MCF 10A (cell line): ENCODE measurements at regions of chr3 and their contacts with region 1.

Region 1: GRCh38 chr3:184765730-184766074 is 46.3 kb upstream of the VPS8 start:
- DNase-seq: peak; percentile 84
- H3K4me3 Mint-ChIP-seq: peak overlapping the region; percentile 59
- H3K27ac Mint-ChIP-seq: peak overlapping the region; percentile 89
- H3K4me1 Mint-ChIP-seq: peaks cover 31% of the 10 kb centered on the region
- H3K27me3 Mint-ChIP-seq: no peaks in the 10 kb centered on the region
- CTCF ChIP-seq: no peak

Region 2: DNA sequence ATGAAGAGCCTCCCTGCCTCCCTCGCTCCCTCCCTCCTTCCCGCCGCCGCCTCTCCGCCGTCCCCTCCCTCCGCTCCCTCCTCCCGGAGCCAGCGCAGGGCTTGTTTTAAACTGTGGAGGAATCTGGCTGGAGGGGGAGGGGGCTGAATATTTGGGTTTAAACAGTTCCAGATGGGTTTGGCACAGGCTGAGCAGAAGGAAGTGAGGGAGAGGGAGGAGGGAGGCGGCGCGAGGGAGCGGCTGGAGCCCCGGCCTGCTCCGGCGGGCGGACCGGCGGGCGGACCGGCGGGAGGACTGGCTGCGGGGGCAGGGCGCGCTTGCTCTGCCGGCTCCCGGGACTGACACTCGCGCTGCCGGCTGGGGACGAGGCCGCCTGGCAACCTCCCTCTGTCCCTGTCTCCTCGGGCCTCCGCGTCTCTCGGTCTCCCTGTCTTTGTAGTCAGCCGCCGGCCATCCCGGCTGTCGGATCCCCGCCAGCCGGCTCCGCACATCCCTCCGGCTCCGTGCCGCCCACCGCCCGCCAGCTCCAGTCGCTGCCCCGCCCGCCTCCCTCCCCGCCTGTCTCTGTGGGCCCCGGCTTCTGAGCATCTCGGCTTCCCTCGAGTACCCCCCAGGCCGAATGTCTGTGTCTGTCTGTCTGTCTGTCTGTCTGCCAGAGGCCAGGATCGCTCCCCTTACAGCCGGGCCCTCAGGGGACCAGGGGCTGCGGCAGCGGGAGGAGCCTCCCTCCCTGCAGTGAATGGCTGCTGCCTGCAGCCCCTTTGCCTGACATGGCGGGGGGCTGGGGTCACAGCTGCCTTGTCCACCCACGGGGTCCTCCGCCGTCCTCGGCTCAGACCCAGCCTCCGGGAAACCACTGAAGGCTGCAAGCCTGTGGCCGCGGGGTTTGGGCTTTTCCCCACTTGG is 196.5 kb before region 1 on chr3:
- CTCF ChIA-PET with region 1: interaction called, 6 read pairs
- POLR2A ChIA-PET with region 1: interaction called, 74 read pairs
- intact Hi-C with region 1: no loop called
- DNase-seq: peak; percentile 78
- H3K4me3 Mint-ChIP-seq: peak overlapping the region; percentile 73
- H3K27ac Mint-ChIP-seq: no peak overlapping the region
- H3K4me1 Mint-ChIP-seq: peaks cover 32% of the 10 kb centered on the region
- H3K27me3 Mint-ChIP-seq: no peaks in the 10 kb centered on the region
- CTCF ChIP-seq: no peak

Region 3: DNA sequence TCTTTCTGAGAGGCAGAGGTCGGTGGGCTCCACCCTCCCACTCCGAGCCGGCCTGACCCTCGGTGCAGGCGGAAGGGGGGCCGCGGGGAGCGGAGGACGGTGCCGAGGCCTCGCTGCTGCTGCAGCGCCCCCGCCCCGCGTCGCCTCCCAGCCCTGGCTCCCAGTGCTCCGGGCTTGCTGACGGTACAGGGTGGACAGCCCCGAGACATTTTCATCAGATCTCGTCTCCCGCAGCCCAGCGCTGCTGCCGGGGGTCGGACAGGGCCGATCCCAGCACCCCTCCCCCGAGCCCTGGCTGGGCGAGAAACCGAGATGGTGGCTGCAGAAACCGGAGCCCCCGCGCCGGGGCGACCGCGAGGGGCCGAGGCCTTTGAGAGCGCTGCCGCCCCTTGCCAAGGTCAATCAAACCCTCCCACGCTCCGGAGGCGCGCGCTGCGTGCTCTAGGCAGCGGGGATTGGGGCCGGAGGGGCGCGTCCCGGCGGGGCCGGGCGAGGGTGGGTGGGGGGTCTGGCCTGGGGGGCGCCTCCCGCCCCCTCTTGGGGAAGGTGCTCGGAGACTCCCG is 161.6 kb before region 1 on chr3:
- CTCF ChIA-PET with region 1: no interaction called
- POLR2A ChIA-PET with region 1: interaction called, 16 read pairs
- intact Hi-C with region 1: no loop called
- DNase-seq: no peak
- H3K4me3 Mint-ChIP-seq: no peak overlapping the region
- H3K27ac Mint-ChIP-seq: no peak overlapping the region
- H3K4me1 Mint-ChIP-seq: peaks cover 29% of the 10 kb centered on the region
- H3K27me3 Mint-ChIP-seq: no peaks in the 10 kb centered on the region
- CTCF ChIP-seq: no peak

Region 4: GRCh38 chr3:184652474-184652873 is 113.2 kb before region 1 on chr3:
- CTCF ChIA-PET with region 1: interaction called, 3 read pairs
- POLR2A ChIA-PET with region 1: interaction called, 22 read pairs
- intact Hi-C with region 1: no loop called
- DNase-seq: peak; percentile 92
- H3K4me3 Mint-ChIP-seq: peak overlapping the region; percentile 20
- H3K27ac Mint-ChIP-seq: peak overlapping the region; percentile 89
- H3K4me1 Mint-ChIP-seq: peaks cover 27% of the 10 kb centered on the region
- H3K27me3 Mint-ChIP-seq: no peaks in the 10 kb centered on the region
- CTCF ChIP-seq: no peak

Region 5: DNA sequence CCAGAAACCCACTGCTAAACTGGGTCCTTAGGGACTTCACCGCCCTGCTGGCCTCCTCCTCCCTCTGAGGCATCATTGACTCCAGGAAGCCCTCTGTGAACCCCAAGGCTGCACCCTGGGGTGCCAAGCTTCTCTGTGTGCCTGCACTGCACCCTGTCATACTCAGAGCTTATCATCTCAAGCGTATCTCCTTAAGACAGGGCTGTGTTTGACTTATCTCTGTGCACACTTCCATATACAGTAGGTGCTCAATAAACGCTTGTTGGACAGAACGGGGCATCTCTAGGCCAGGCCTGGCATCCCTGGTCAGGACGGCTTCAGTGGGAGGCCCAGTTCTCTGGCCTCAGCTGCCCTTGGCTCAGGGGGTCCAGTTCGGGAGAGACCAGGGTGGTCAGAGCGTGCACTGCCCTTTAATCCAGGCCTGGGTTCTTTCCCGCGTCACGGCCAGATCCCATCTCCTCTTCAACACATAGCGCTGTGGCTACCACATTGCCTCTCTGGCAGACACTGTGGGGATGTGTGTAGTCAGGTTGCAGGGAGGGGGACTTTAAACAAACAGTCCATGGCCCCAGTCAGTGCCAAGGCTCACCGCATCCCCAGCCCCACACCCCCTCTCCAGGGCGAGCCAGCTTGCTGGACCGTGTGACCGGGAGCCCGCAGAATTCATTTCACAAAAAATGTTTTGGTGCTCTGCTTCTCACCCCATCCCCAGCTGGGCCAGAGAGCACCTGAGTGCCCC is 87.2 kb before region 1 on chr3:
- CTCF ChIA-PET with region 1: no interaction called
- POLR2A ChIA-PET with region 1: no interaction called
- intact Hi-C with region 1: no loop called
- DNase-seq: no peak
- H3K4me3 Mint-ChIP-seq: no peak overlapping the region
- H3K27ac Mint-ChIP-seq: no peak overlapping the region
- H3K4me1 Mint-ChIP-seq: no peaks in the 10 kb centered on the region
- H3K27me3 Mint-ChIP-seq: no peaks in the 10 kb centered on the region
- CTCF ChIP-seq: no peak

Region 6: DNA sequence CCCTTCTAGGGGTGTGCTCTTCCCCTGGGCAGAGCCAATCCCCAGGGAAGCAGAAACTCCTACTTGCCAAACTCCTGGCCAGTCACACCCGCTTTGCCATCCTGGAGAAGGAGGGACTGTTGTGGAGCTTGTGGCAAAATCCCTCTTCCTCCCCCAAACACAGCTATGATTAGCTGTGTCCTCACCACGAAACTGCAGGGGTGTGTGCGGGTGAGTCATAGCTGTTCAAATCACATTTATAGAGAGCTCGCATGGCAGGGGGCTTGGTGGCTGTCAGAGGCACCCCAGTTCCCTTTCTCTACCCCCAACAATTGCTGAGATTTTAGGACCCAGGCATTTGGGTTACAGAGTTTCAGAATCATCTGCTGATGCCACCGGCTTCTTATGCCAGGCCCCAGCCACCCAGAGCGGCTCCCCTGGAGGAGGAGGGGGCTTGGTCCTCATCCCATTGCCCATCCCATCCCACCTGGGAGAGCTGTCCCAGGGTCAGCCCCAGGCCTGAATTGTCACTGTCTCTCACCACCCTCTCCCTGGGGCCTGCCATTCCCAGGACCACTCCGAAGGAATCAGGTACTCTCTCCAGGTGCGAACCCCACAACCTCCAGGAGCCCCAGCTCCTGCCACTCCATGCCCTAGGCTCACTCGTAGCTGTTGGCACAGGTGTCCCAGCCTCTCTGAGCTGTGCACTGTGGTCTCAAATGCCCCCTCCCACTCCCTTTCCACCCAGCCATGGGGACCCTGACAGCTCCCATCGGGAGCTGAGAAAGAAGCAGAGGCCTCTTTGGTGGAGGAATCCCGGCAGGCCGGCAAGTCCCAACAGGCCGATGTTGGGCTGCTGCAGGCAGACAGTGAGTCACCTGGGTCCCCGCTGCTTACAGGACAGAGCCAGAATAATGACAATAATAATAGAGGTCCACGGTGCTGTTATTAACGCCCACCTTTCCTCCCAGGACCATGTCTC is 24.9 kb before region 1 on chr3:
- CTCF ChIA-PET with region 1: interaction called, 6 read pairs
- POLR2A ChIA-PET with region 1: interaction called, 183 read pairs
- intact Hi-C with region 1: loop called (anchors 1 kb)
- DNase-seq: peak; percentile 96
- H3K4me3 Mint-ChIP-seq: peak overlapping the region; percentile 68
- H3K27ac Mint-ChIP-seq: peak overlapping the region; percentile 93
- H3K4me1 Mint-ChIP-seq: peaks cover 48% of the 10 kb centered on the region
- H3K27me3 Mint-ChIP-seq: no peaks in the 10 kb centered on the region
- CTCF ChIP-seq: no peak

Region 7: DNA sequence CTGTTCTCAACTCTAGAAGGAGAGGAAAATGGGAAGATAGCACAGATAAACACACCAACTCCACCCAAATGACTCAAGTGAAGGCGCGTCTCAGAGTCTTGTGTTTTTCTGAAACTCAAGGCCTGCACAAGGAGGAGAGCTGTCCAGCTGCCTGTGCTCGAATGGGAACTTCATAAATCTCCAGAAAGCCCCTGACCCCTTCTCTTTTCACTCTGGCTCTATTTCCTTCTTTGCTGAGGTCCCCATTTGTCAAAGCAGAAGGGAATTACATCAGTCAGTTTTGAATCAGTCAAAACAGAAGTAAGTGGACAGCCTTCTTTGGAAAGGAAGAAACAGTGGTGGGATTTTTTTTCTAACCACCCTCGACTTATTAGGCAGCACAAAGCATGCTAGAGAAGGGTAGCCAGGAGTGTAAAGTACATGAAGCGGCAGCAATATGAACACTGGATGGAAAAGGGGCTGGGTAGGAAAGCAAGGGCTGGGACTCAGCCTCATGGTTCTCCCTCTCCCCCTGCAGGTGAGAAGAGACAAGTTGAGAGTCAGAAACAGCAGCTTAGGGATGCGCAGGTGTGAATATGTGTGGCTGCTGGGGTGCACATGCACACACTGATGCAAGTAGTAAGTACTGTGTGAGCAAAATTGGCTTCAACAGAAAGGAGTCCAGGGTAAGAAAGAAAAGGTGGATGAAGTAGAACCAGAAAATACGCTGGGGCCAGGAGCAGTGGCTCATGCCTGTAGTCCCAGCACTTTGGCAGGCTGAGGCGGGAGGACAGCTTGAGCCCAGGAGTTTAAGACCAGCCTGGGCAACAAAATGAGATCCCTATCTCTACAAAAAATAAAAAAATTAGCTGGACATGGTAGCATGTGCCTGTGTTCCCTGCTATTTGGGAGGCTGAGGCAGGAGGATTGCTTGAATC is 17.2 kb before region 1 on chr3:
- CTCF ChIA-PET with region 1: interaction called, 33 read pairs
- POLR2A ChIA-PET with region 1: interaction called, 183 read pairs
- intact Hi-C with region 1: no loop called
- DNase-seq: peak; percentile 73
- H3K4me3 Mint-ChIP-seq: no peak overlapping the region
- H3K27ac Mint-ChIP-seq: no peak overlapping the region
- H3K4me1 Mint-ChIP-seq: peaks cover 18% of the 10 kb centered on the region
- H3K27me3 Mint-ChIP-seq: no peaks in the 10 kb centered on the region
- CTCF ChIP-seq: peak; percentile 60